ENCODE measurements at regions of chr13 and their contacts with region 1.

Region 1: GRCh38 chr13:33052506-33053280 is 36.5 kb downstream of the KL start:
- DNase-seq: no peak
- ATAC-seq: no peak
- H3K4me3 ChIP-seq: no peak overlapping the region
- H3K27ac ChIP-seq: no peak overlapping the region
- H3K4me1 ChIP-seq: peaks cover 11% of the 10 kb centered on the region; the same call in 1 of the 2 replicates
- H3K27me3 ChIP-seq: no peaks in the 10 kb centered on the region
- CTCF ChIP-seq: no peak
- EP300 ChIP-seq: no peak
- POLR2A ChIP-seq: no peak
- RAD21 ChIP-seq: no peak

Region 2: DNA sequence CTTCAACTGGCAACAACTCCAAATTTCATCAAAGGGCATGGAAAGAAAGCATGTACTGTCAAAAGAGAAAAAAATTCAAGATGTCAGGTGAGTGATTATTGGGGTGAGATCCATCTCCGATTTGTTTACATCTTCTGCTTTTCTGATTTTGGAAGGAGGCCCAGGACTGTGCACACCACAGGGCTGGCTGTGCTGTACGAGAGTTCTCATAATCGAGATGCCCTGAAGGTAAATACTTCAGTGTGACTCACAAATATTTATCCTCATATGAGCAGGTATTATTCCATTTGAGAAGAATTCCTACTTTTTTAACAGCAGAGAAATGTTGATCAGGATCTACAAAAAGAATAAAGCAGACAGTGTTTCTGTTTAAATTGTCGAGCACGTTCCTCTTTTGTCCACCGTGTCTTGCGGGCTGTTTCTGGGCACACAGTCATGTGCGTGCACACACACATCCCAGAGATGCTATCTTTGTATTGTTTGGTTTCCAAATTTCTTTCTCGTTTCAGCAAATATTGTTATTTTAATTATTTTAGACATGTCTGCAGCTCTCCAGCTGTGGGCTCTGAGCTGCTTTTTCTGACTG is 67.3 kb after region 1 on chr13:
- CTCF ChIA-PET with region 1: no interaction called
- POLR2A ChIA-PET with region 1: no interaction called
- RAD21 ChIA-PET with region 1: no interaction called
- SMC1A ChIA-PET with region 1: no interaction called
- in situ Hi-C with region 1: no loop called
- intact Hi-C with region 1: no loop called
- DNase-seq: no peak
- ATAC-seq: no peak
- H3K4me3 ChIP-seq: no peak overlapping the region
- H3K27ac ChIP-seq: no peak overlapping the region
- H3K4me1 ChIP-seq: no peaks in the 10 kb centered on the region
- H3K27me3 ChIP-seq: no peaks in the 10 kb centered on the region
- CTCF ChIP-seq: no peak
- EP300 ChIP-seq: no peak
- POLR2A ChIP-seq: no peak
- RAD21 ChIP-seq: no peak

Region 3: DNA sequence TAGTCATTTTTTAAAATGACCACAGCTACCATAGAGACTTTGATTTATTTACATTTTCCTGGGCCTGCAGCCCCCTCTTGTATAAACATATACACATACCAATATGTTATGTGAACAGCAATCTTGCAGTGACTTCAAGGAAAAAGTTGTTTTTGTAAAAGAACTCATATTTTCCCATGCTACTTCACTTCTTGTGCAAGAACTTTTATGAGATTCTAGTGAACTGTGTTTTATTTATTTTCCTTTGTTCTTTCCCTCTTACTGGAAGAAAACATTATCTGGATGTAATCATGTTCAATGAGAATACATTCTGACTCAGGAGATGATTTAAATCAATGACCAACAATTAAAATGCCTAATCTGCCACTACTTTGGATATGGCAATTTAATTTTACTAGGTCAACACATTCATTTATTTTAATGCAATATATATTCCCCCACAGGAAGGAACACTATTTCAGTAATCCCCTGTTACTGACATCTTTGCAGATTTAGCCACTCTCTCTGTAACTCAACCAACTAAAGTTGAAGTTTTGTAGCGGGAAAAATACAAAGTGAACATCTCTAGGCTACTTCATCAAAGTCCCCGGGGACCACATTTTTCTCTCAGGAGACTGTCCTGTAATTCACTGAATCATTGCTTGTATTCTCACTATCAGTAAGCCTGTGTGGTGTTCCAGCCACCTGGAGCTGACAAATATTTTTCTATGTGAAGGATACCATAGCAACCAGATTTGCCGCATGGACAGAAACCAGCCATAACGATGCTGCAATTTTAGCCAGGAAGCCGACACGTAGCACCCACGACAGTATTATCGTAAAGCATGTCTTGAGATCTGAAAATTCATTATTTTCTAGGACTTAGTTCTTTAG is 142.4 kb after region 1 on chr13:
- CTCF ChIA-PET with region 1: no interaction called
- POLR2A ChIA-PET with region 1: no interaction called
- RAD21 ChIA-PET with region 1: no interaction called
- SMC1A ChIA-PET with region 1: no interaction called
- in situ Hi-C with region 1: no loop called
- intact Hi-C with region 1: loop called (anchors 5 kb)
- DNase-seq: peak; percentile 99
- ATAC-seq: peak; percentile 71
- H3K4me3 ChIP-seq: peak overlapping the region; percentile 54
- H3K27ac ChIP-seq: peak overlapping the region; percentile 92
- H3K4me1 ChIP-seq: peaks cover 29% of the 10 kb centered on the region
- H3K27me3 ChIP-seq: no peaks in the 10 kb centered on the region
- CTCF ChIP-seq: no peak
- EP300 ChIP-seq: peak; percentile 71 to 95
- POLR2A ChIP-seq: no peak
- RAD21 ChIP-seq: 0 out of 2 replicates have a peak, but pooled peaks have one; percentile 24

Measured in GM12878 (cell line).